ENCODE measurements at regions of chr10 and their contacts with region 1.

Region 1: GRCh38 chr10:31864834-31865518 is 63.7 kb downstream of the ARHGAP12 start:
- DNase-seq: no peak
- CTCF ChIP-seq: no peak

Region 2: GRCh38 chr10:31656851-31657433 is 208.0 kb before region 1 on chr10:
- in situ Hi-C with region 1: no loop called
- DNase-seq: no peak
- CTCF ChIP-seq: no peak

Region 3: DNA sequence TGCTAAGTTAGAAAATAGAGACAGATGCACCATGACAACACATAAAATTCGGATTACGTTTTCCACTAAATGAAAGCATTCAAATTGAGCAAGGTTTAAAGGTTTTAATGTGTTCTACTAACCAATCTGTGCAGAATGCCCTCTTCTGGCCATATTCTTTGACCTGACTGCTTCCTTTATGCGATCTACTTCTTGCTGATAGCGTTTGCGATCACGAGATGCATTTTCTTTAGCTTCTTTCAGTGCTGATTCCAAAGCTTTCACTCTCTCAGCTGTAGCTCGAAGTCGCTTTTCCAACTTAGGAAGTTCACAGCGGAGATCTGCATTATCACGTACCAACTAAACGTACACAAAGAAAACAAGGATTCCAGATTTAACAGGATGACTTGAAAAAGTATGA is 152.0 kb after region 1 on chr10:
- in situ Hi-C with region 1: loop called (anchors 10 kb)
- DNase-seq: no peak
- CTCF ChIP-seq: no peak

Region 4: GRCh38 chr10:32386623-32387260 is 521.8 kb after region 1 on chr10:
- in situ Hi-C with region 1: no loop called
- DNase-seq: no peak
- CTCF ChIP-seq: no peak

Measured in GM13976 (cell line).